SK-N-SH (cell line): ENCODE measurements at regions of chr4 and their contacts with region 1.

Region 1: GRCh38 chr4:55345980-55346850 is at the start of gene SRD5A3:
- DNase-seq: peak; percentile 96
- H3K4me3 ChIP-seq: peak within 1 kb of the TSS; percentile 67 to 70
- H3K27ac ChIP-seq: peak within 1 kb of the TSS; percentile 74 to 92
- H3K4me1 ChIP-seq: peaks cover 0 to 5% of the 10 kb centered on the region in 2 experiments; a peak in 3 of 4 replicates
- H3K27me3 ChIP-seq: no peaks in the 10 kb centered on the region; the same call in 1 of the 2 replicates
- CTCF ChIP-seq: peak; percentile 83
- EP300 ChIP-seq: no peak
- RAD21 ChIP-seq: peak; percentile 65
- polyA plus RNA-seq, gene SRD5A3: 5.1 TPM in 2 replicates

Region 2: GRCh38 chr4:54971474-54971950 is 374.7 kb before region 1 on chr4:
- CTCF ChIA-PET with region 1: interaction called, 22 read pairs
- POLR2A ChIA-PET with region 1: no interaction called
- DNase-seq: peak; percentile 43
- H3K4me3 ChIP-seq: peak overlapping the region in 1 of 2 experiments; percentile 28; a peak in 1 of 4 replicates
- H3K27ac ChIP-seq: no peak overlapping the region
- H3K4me1 ChIP-seq: peaks cover 0 to 2% of the 10 kb centered on the region in 2 experiments; a peak in 1 of 4 replicates
- H3K27me3 ChIP-seq: no peaks in the 10 kb centered on the region; the same call in 1 of the 2 replicates
- CTCF ChIP-seq: peak; percentile 95
- EP300 ChIP-seq: no peak
- RAD21 ChIP-seq: peak; percentile 81

Region 3: GRCh38 chr4:55356991-55357461 is 10.8 kb after region 1 on chr4:
- CTCF ChIA-PET with region 1: interaction called, 17 read pairs
- POLR2A ChIA-PET with region 1: interaction called, 5 read pairs
- DNase-seq: no peak
- H3K4me3 ChIP-seq: no peak overlapping the region
- H3K27ac ChIP-seq: no peak overlapping the region; a peak in 1 of 4 replicates
- H3K4me1 ChIP-seq: peaks cover 0 to 19% of the 10 kb centered on the region in 2 experiments; a peak in 2 of 4 replicates
- H3K27me3 ChIP-seq: no peaks in the 10 kb centered on the region
- CTCF ChIP-seq: no peak
- EP300 ChIP-seq: no peak
- RAD21 ChIP-seq: no peak

Region 4: DNA sequence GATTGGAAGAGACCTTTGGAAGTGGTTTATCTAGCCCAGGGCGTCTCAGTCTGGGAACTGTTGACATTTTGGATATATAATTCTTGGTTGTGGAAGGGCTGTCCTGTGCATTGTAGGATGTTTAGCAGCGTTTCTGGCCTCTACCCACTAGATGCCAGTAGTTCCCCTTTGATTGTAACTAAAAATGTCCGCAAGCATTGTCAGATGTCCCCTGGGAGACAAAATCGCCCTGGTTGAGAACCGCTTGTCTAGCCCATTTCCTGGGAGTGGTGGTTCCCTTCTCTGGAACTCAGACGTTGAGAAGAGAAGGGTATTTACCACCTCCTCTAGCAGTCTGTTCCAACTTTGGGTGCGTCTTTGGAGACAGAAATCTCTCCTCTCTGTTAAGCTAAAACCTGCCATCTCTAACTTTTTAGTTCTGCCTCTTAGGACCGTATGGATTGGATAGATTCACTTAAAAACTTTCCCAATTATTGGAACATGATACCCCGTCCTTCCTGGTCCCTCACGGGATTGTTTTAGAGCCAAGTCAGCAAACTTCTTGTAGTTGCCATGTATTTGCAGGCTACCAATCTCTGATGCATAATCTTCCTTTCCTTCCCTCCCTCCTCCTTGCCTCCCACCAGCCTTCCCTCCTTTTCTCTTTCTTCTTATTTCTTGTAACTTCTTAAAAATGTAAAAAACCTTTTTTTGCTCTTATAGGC is 63.4 kb after region 1 on chr4:
- CTCF ChIA-PET with region 1: interaction called, 16 read pairs
- POLR2A ChIA-PET with region 1: no interaction called
- DNase-seq: no peak
- H3K4me3 ChIP-seq: no peak overlapping the region
- H3K27ac ChIP-seq: no peak overlapping the region; a peak in 1 of 4 replicates
- H3K4me1 ChIP-seq: no peaks in the 10 kb centered on the region; a peak in 2 of 4 replicates
- H3K27me3 ChIP-seq: no peaks in the 10 kb centered on the region
- CTCF ChIP-seq: peak; percentile 31; the same call in 1 of the 2 replicates
- EP300 ChIP-seq: no peak
- RAD21 ChIP-seq: peak; percentile 48

Region 5: DNA sequence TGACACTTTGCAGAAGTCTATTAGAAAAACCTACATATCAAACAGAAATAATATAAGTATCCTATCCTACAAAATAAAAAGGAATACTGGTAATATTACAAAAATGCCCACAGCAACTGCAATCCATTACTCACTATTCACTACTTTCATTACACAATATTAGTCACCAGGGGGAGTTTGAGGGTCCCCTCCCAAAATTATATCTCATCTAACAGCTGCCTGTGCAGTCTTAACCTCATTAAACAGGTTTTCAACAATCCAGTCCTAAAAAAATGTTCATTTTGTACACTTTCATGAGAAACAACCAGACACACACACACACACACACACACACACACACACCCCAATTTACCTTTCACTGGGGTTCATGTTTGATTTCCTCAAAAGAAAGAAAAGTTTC is 197.6 kb after region 1 on chr4:
- CTCF ChIA-PET with region 1: interaction called, 13 read pairs
- POLR2A ChIA-PET with region 1: interaction called, 5 read pairs
- DNase-seq: peak; percentile 23
- H3K4me3 ChIP-seq: peak overlapping the region in 1 of 2 experiments; percentile 67; a peak in 1 of 4 replicates
- H3K27ac ChIP-seq: peak overlapping the region in 1 of 2 experiments; percentile 93; a peak in 2 of 4 replicates
- H3K4me1 ChIP-seq: peaks cover 10% of the 10 kb centered on the region in 2 experiments
- H3K27me3 ChIP-seq: no peaks in the 10 kb centered on the region
- CTCF ChIP-seq: peak; percentile 41
- EP300 ChIP-seq: no peak
- RAD21 ChIP-seq: peak; percentile 31; the same call in 1 of the 2 replicates